ENCODE measurements at regions of chr13 and their contacts with region 1.

Region 1: GRCh38 chr13:95624020-95624419 is 20.5 kb downstream of the DZIP1 start:
- DNase-seq: peak; percentile 27 to 59 (median 32)
- ATAC-seq: peak; percentile 71
- H3K4me3 ChIP-seq: no peak overlapping the region
- H3K27ac ChIP-seq: no peak overlapping the region
- H3K4me1 ChIP-seq: no peaks in the 10 kb centered on the region
- H3K27me3 ChIP-seq: no peaks in the 10 kb centered on the region
- CTCF ChIP-seq: peak; percentile 40 to 71 (median 48); a peak in 5 of 6 replicates
- EP300 ChIP-seq: no peak
- POLR2A ChIP-seq: no peak
- RAD21 ChIP-seq: peak; percentile 63 to 74

Region 2: DNA sequence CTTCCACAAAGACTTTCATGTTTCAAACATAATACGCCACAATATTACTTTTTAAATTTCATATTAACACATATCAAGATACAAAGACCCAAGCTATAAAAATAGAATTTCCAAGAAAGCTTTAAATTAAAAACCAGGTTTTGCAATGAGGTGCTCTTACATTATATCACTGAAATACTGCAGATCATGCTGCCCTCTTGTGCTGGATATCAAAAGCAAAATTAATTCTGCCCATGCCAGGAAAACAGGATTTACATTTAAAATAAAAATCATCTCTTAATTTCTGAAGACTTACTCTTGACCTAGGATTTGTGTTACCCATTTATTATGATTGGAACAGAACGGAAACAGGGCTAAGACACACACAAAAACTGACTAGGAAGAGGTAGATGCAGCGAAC is 467.8 kb before region 1 on chr13:
- CTCF ChIA-PET with region 1: no interaction called
- POLR2A ChIA-PET with region 1: no interaction called
- in situ Hi-C with region 1: no loop called
- intact Hi-C with region 1: no loop called
- DNase-seq: no peak
- ATAC-seq: no peak
- H3K4me3 ChIP-seq: no peak overlapping the region
- H3K27ac ChIP-seq: no peak overlapping the region
- H3K4me1 ChIP-seq: no peaks in the 10 kb centered on the region
- H3K27me3 ChIP-seq: no peaks in the 10 kb centered on the region
- CTCF ChIP-seq: no peak
- EP300 ChIP-seq: no peak
- POLR2A ChIP-seq: no peak
- RAD21 ChIP-seq: no peak

Region 3: GRCh38 chr13:95536632-95537241 is 87.3 kb before region 1 on chr13:
- CTCF ChIA-PET with region 1: no interaction called
- POLR2A ChIA-PET with region 1: no interaction called
- in situ Hi-C with region 1: no loop called
- intact Hi-C with region 1: loop called (anchors 5 kb)
- DNase-seq: peak in 1 of 4 experiments; percentile 11
- ATAC-seq: no peak
- H3K4me3 ChIP-seq: no peak overlapping the region
- H3K27ac ChIP-seq: no peak overlapping the region
- H3K4me1 ChIP-seq: no peaks in the 10 kb centered on the region
- H3K27me3 ChIP-seq: no peaks in the 10 kb centered on the region
- CTCF ChIP-seq: peak in 2 of 3 experiments; percentile 39 to 55; a peak in 4 of 6 replicates
- EP300 ChIP-seq: no peak
- POLR2A ChIP-seq: no peak
- RAD21 ChIP-seq: peak; percentile 26 to 53

Region 4: GRCh38 chr13:95564733-95565291 is 59.2 kb before region 1 on chr13:
- CTCF ChIA-PET with region 1: no interaction called
- POLR2A ChIA-PET with region 1: no interaction called
- in situ Hi-C with region 1: no loop called
- intact Hi-C with region 1: no loop called
- DNase-seq: no peak
- ATAC-seq: no peak
- H3K4me3 ChIP-seq: no peak overlapping the region
- H3K27ac ChIP-seq: no peak overlapping the region
- H3K4me1 ChIP-seq: no peaks in the 10 kb centered on the region
- H3K27me3 ChIP-seq: peaks cover 0 to 3% of the 10 kb centered on the region in 2 experiments; a peak in 1 of 5 replicates
- CTCF ChIP-seq: no peak
- EP300 ChIP-seq: no peak
- POLR2A ChIP-seq: no peak
- RAD21 ChIP-seq: no peak

Region 5: GRCh38 chr13:95660981-95661581 is 37.1 kb after region 1 on chr13:
- CTCF ChIA-PET with region 1: interaction called, 5 read pairs
- POLR2A ChIA-PET with region 1: no interaction called
- in situ Hi-C with region 1: no loop called
- intact Hi-C with region 1: loop called (anchors 5 kb)
- DNase-seq: peak; percentile 12 to 41 (median 22)
- ATAC-seq: peak; percentile 51; the same call in 1 of the 3 replicates
- H3K4me3 ChIP-seq: no peak overlapping the region
- H3K27ac ChIP-seq: no peak overlapping the region
- H3K4me1 ChIP-seq: peaks cover 0 to 5% of the 10 kb centered on the region in 2 experiments; a peak in 1 of 5 replicates
- H3K27me3 ChIP-seq: no peaks in the 10 kb centered on the region
- CTCF ChIP-seq: peak; percentile 29 to 64 (median 39); a peak in 3 of 6 replicates
- EP300 ChIP-seq: no peak
- POLR2A ChIP-seq: no peak
- RAD21 ChIP-seq: peak in 1 of 2 experiments; percentile 52; a peak in 2 of 4 replicates

Region 6: GRCh38 chr13:95834134-95834765 is 210.2 kb after region 1 on chr13:
- CTCF ChIA-PET with region 1: interaction called, 11 read pairs
- POLR2A ChIA-PET with region 1: no interaction called
- in situ Hi-C with region 1: loop called (anchors 10 kb)
- intact Hi-C with region 1: loop called (anchors 1 kb)
- DNase-seq: peak; percentile 56 to 63 (median 60)
- ATAC-seq: peak; percentile 85
- H3K4me3 ChIP-seq: no peak overlapping the region
- H3K27ac ChIP-seq: no peak overlapping the region
- H3K4me1 ChIP-seq: no peaks in the 10 kb centered on the region
- H3K27me3 ChIP-seq: no peaks in the 10 kb centered on the region
- CTCF ChIP-seq: peak; percentile 72 to 80 (median 79)
- EP300 ChIP-seq: no peak
- POLR2A ChIP-seq: no peak
- RAD21 ChIP-seq: peak; percentile 81 to 82

Region 7: DNA sequence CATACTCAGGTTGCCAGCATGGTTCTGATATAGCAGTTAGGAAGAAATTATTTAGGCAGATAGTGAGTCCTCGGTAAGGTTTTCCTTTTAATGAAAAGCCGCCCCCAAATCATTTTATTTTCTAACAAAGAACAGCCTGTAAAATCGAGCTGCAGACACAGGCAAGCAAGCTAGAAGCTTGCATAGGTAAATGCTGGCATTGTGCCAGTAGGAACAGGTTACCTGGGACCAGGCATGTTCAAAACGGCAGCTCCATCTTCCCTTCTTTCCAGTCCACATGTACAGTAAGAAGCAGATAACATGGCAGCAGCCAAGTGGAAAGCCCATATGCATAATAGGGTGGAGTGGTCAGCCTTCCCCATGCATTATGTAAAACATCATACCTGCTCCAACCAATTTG is 358.1 kb after region 1 on chr13:
- CTCF ChIA-PET with region 1: no interaction called
- POLR2A ChIA-PET with region 1: no interaction called
- in situ Hi-C with region 1: no loop called
- intact Hi-C with region 1: loop called (anchors 5 kb)
- DNase-seq: peak in 1 of 4 experiments; percentile 8
- ATAC-seq: peak; percentile 23; the same call in 1 of the 3 replicates
- H3K4me3 ChIP-seq: no peak overlapping the region
- H3K27ac ChIP-seq: no peak overlapping the region
- H3K4me1 ChIP-seq: no peaks in the 10 kb centered on the region
- H3K27me3 ChIP-seq: no peaks in the 10 kb centered on the region
- CTCF ChIP-seq: no peak
- EP300 ChIP-seq: no peak
- POLR2A ChIP-seq: no peak
- RAD21 ChIP-seq: no peak

Region 8: DNA sequence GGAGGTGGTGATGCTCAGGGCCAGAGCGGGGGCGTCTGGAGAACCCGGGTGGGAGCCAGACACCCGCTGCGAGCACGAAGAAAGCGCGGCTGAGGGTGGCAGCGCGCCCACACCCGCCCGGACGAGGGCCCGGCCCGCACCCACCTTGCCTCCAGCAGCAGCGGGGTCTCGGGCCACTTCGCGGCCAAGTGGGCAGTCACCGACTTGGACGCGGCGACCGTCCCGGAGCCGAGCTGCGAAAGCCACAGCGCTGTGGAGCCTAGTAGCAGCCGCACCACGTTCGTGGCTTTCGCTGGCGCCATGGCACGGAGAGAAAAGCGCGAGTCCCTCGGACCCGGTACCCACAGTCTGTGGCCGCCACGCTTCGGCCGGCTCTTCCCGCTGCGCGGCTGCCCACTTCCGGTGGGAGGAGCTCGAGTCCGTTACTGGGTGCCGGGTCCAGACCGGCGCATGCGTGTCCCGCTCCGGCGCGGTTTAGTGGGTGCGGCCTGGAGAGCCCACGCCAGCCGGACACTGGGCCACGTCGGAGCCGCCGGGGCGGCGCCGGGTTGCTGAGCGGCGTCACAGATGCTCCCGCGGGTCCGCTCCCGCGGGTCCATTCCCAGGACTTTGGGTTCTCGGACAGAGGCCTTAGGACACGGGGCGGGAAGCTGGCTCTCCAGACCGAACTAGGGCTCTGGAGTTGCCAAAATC is 429.1 kb after region 1 on chr13 and contains the start of gene UGGT2:
- CTCF ChIA-PET with region 1: no interaction called
- POLR2A ChIA-PET with region 1: no interaction called
- in situ Hi-C with region 1: no loop called
- intact Hi-C with region 1: no loop called
- DNase-seq: peak; percentile 92 to 95 (median 92)
- ATAC-seq: peak; percentile 99
- H3K4me3 ChIP-seq: peak within 1 kb of the TSS; percentile 80
- H3K27ac ChIP-seq: peak within 1 kb of the TSS; percentile 86
- H3K4me1 ChIP-seq: peaks cover 0 to 11% of the 10 kb centered on the region in 2 experiments; a peak in 2 of 5 replicates
- H3K27me3 ChIP-seq: no peaks in the 10 kb centered on the region
- CTCF ChIP-seq: no peak
- EP300 ChIP-seq: no peak
- POLR2A ChIP-seq: peak; percentile 89
- RAD21 ChIP-seq: no peak
- polyA plus RNA-seq, gene UGGT2: 3.5 to 4.0 TPM

Region 9: GRCh38 chr13:96229356-96229755 is 605.3 kb after region 1 on chr13:
- CTCF ChIA-PET with region 1: no interaction called
- POLR2A ChIA-PET with region 1: no interaction called
- in situ Hi-C with region 1: no loop called
- intact Hi-C with region 1: loop called (anchors 10 kb)
- DNase-seq: peak; percentile 8 to 28 (median 14)
- ATAC-seq: peak; percentile 82
- H3K4me3 ChIP-seq: no peak overlapping the region
- H3K27ac ChIP-seq: no peak overlapping the region
- H3K4me1 ChIP-seq: no peaks in the 10 kb centered on the region
- H3K27me3 ChIP-seq: no peaks in the 10 kb centered on the region
- CTCF ChIP-seq: peak; percentile 44 to 58 (median 57)
- EP300 ChIP-seq: no peak
- POLR2A ChIP-seq: no peak
- RAD21 ChIP-seq: peak in 1 of 2 experiments; percentile 45; a peak in 2 of 4 replicates

Region 10: GRCh38 chr13:96967248-96967745 is 1343.3 kb after region 1 on chr13:
- CTCF ChIA-PET with region 1: no interaction called
- POLR2A ChIA-PET with region 1: no interaction called
- in situ Hi-C with region 1: no loop called
- intact Hi-C with region 1: loop called (anchors 10 kb)
- DNase-seq: peak; percentile 54 to 64 (median 60)
- ATAC-seq: peak; percentile 93
- H3K4me3 ChIP-seq: peak overlapping the region; percentile 13; the same call in 1 of the 2 replicates
- H3K27ac ChIP-seq: no peak overlapping the region
- H3K4me1 ChIP-seq: no peaks in the 10 kb centered on the region
- H3K27me3 ChIP-seq: no peaks in the 10 kb centered on the region
- CTCF ChIP-seq: peak; percentile 16 to 51 (median 35); a peak in 4 of 6 replicates
- EP300 ChIP-seq: no peak
- POLR2A ChIP-seq: no peak
- RAD21 ChIP-seq: no peak